ENCODE measurements at regions of chr9 and their contacts with region 1.

Region 1: DNA sequence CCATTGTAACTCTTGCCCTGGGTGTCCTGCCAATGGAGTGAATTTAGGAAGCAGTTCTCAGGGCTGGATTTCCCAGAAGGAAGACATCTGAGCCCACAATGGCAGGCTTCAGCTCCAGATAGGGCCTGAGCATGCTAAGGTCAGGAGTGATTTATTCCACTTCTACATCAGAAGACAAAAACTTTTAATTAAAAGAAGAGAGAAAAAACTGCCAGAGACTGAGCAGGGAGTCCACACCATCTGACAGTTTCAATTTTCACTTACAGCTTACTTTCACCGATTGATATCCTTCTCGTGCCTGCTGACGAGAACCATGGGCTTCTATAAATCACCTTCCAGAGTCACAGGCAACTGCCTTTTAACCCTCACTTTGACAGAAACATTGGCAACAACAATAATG is 228.3 kb upstream of the BRINP1 start:
- DNase-seq: no peak
- H3K4me3 ChIP-seq: no peak overlapping the region
- H3K27ac ChIP-seq: no peak overlapping the region
- H3K4me1 ChIP-seq: no peaks in the 10 kb centered on the region
- H3K27me3 ChIP-seq: no peaks in the 10 kb centered on the region
- CTCF ChIP-seq: no peak

Region 2: DNA sequence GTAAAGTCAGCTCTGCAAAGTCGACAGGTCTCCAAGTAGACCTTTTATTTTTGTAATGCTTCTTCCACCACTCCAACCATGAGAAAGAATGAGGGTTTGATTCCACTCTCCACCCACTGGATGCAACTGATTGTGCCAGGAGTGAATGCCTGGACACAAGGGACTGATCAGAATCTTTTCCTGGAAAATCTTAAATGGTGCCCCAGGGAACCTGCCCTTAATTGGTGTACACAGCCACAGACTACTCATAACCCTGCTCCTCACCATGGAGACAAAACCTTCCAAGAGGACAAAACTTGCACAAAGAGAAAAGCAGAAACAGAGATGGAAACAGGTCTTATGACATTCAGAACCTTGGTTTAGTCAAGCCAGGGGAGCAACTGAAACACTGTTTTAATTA is 19.6 kb before region 1 on chr9:
- intact Hi-C with region 1: loop called (anchors 1 kb)
- DNase-seq: no peak
- H3K4me3 ChIP-seq: no peak overlapping the region
- H3K27ac ChIP-seq: no peak overlapping the region
- H3K4me1 ChIP-seq: no peaks in the 10 kb centered on the region
- H3K27me3 ChIP-seq: no peaks in the 10 kb centered on the region
- CTCF ChIP-seq: no peak